PC-9 (cell line): ENCODE measurements at regions of chr12 and their contacts with region 1.

Region 1: DNA sequence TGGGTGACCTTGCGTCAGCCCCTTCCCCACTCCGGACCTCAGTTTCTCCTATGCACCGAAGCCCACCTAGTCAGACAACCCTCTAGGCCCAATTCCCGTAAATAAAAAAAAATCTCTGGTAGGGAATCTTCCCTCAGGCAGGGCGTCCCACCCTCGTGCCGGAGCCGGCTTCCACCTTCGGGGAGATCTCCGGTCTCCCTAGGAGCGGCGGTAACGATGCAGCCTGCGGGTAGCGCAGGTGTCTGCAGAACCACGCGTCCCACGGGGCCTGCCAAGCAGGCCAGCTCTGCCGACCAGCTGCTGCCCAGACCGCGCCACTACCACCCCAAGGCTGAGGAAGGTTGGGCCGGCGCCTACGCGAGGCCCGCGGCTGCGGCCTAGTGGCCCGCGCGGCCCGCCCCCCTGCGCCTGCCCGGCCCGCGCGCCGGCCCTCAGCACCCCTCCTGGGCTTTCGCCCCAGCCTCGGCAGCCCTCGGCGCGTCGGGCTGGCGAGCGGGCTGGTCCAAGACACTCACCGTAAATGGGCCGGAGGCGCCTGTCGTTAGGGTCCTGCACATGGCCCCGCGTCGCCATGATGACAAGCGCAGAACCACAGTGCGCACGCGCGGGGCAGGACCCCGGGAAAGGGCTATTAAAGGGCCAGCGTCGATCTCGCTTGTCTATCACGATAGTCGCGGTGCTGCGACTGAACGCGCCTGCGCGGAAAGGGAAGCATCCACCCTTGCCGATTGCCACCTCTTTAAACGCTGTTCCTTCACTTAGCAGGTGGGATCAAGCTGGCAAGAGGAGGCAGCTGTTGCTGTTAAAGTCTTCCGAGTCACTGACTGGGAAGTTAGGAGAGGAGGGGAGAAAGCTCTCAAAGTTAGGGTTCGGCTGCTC is at the start of gene NAA25:
- DNase-seq: peak; percentile 78 to 82
- H3K4me3 ChIP-seq: peak within 1 kb of the TSS; percentile 68
- H3K27ac ChIP-seq: peak within 1 kb of the TSS; percentile 94
- H3K4me1 ChIP-seq: peaks cover 58% of the 10 kb centered on the region
- H3K27me3 ChIP-seq: no peaks in the 10 kb centered on the region
- CTCF ChIP-seq: no peak
- total RNA-seq, gene NAA25: 29.5 and 37.0 TPM in 2 replicates

Region 2: DNA sequence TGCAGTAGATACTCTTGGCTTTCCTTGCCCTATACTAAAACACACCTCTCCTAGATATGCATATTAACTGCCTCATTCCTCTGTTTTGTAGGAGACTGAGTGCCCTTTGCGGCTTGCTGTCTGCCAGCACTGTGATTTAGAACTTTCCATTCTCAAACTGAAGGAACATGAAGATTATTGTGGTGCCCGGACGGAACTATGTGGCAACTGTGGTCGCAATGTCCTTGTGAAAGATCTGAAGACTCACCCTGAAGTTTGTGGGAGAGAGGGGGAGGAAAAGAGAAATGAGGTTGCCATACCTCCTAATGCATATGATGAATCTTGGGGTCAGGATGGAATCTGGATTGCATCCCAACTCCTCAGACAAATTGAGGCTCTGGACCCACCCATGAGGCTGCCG is 32.3 kb after region 1 on chr12:
- CTCF ChIA-PET with region 1: interaction called, 3 read pairs
- POLR2A ChIA-PET with region 1: interaction called, 10 read pairs
- intact Hi-C with region 1: no loop called
- DNase-seq: no peak
- H3K4me3 ChIP-seq: no peak overlapping the region
- H3K27ac ChIP-seq: no peak overlapping the region
- H3K4me1 ChIP-seq: peaks cover 24% of the 10 kb centered on the region
- H3K27me3 ChIP-seq: no peaks in the 10 kb centered on the region
- CTCF ChIP-seq: no peak